ENCODE measurements at regions of chr10 and their contacts with region 1.

Region 1: GRCh38 chr10:101818119-101818871 is at the start of gene OGA:
- DNase-seq: peak; percentile 97 to 100 (median 99)
- H3K4me3 ChIP-seq: peak within 1 kb of the TSS; percentile 95
- H3K4me3 Mint-ChIP-seq: peak within 1 kb of the TSS; percentile 94 to 100 (median 98)
- H3K27ac ChIP-seq: peak within 1 kb of the TSS; percentile 85
- H3K27ac Mint-ChIP-seq: peak within 1 kb of the TSS; percentile 91 to 100 (median 97)
- H3K4me1 ChIP-seq: peaks cover 47% of the 10 kb centered on the region
- H3K4me1 Mint-ChIP-seq: peaks cover 31 to 59% (median 42%) of the 10 kb centered on the region in 4 donors
- H3K27me3 ChIP-seq: no peaks in the 10 kb centered on the region
- H3K27me3 Mint-ChIP-seq: no peaks in the 10 kb centered on the region
- total RNA-seq, gene OGA: 307 to 325 TPM

Region 2: DNA sequence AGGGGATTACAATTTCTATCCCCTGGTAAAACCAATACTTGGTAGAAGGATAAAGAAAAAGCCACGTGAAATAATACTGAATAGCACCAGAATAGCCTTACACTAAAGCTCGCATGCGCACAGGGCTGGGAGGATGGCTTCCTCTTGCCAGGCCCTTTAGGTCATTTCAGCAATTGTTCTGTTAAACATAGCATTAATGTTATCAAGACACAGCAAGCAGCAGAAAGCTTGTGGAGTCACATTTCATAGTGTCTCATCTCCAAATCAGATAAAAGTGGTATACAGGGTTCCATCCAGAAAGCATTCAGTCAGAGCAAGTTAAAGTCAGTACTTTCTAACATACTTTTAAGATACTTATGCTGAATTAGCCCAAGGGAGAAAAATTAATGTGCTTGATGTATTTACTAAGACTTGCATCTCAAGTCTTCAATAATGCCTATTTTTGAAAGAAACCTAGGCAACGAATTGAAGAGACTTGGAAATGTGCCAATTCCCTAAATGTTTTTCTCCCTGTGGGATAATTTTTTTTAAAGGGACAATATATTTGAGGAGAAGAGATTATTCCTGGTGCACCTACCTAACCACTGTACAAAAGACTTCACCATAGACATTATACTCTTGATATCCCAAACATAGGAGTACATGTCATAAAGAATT is 20.8 kb before region 1 on chr10:
- CTCF ChIA-PET with region 1: interaction called, 4 read pairs
- POLR2A ChIA-PET with region 1: interaction called, 30 read pairs
- intact Hi-C with region 1: loop called (anchors 2 kb)
- DNase-seq: no peak
- H3K4me3 ChIP-seq: no peak overlapping the region
- H3K4me3 Mint-ChIP-seq: no peak overlapping the region
- H3K27ac ChIP-seq: no peak overlapping the region
- H3K27ac Mint-ChIP-seq: peak overlapping the region in 4 of 7 donors; percentile 5 to 91 (median 27)
- H3K4me1 ChIP-seq: peaks cover 38% of the 10 kb centered on the region
- H3K4me1 Mint-ChIP-seq: peaks cover 22 to 35% (median 26%) of the 10 kb centered on the region in 4 donors
- H3K27me3 ChIP-seq: no peaks in the 10 kb centered on the region
- H3K27me3 Mint-ChIP-seq: no peaks in the 10 kb centered on the region

Region 3: GRCh38 chr10:101807158-101807557 is 11.1 kb before region 1 on chr10:
- CTCF ChIA-PET with region 1: interaction called, 3 read pairs
- POLR2A ChIA-PET with region 1: interaction called, 30 read pairs
- intact Hi-C with region 1: no loop called
- DNase-seq: no peak
- H3K4me3 ChIP-seq: no peak overlapping the region
- H3K4me3 Mint-ChIP-seq: no peak overlapping the region
- H3K27ac ChIP-seq: no peak overlapping the region
- H3K27ac Mint-ChIP-seq: peak overlapping the region in 3 of 7 donors; percentile 29 to 43 (median 35)
- H3K4me1 ChIP-seq: peaks cover 32% of the 10 kb centered on the region
- H3K4me1 Mint-ChIP-seq: peaks cover 18 to 37% (median 28%) of the 10 kb centered on the region in 4 donors
- H3K27me3 ChIP-seq: no peaks in the 10 kb centered on the region
- H3K27me3 Mint-ChIP-seq: no peaks in the 10 kb centered on the region

Region 4: DNA sequence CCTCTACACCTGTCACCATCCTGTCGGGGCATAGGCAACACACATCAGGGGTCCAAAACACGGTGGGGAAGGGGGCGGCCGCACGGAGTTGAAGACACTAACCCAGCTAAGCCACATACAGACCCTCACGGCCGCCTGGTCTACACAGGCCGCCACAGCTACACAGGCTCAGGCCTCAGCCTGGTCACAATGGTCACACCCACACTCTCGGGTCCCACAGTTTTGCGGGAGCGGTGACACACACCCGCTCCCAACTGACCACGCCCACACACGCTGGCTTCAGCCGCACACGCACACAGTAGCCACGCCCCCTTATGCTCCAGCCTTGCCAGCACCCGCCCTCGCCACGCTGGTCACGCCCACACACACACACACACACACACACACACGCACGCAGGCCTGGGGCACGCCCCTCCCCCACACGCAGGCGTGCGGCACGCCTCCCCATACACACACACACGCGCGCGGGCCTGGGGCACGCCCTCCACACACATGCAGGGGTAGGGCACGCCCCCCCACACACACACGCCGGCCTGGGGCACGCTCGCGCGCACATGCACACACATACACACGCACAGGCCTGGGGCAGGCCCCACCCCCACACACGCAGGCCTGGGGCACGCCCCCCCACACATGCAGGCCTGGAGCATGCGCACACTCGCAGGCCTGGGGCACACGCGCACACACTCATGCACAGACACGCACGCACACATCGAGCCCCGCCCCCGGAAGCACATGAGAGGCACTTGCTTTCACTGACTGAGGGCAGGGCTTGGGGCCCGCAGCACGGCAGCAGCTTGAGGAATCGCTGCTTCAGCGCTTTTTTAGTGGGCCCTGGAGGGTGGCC is 12.2 kb after region 1 on chr10:
- CTCF ChIA-PET with region 1: interaction called, 88 read pairs
- POLR2A ChIA-PET with region 1: interaction called, 204 read pairs
- intact Hi-C with region 1: loop called (anchors 1 kb)
- DNase-seq: peak; percentile 95 to 98 (median 97)
- H3K4me3 ChIP-seq: peak overlapping the region; percentile 57 to 68
- H3K4me3 Mint-ChIP-seq: peak overlapping the region; percentile 84 to 93 (median 88)
- H3K27ac ChIP-seq: peak overlapping the region; percentile 87
- H3K27ac Mint-ChIP-seq: peak overlapping the region; percentile 98 to 100 (median 99)
- H3K4me1 ChIP-seq: peaks cover 59% of the 10 kb centered on the region
- H3K4me1 Mint-ChIP-seq: peaks cover 44 to 80% (median 57%) of the 10 kb centered on the region in 4 donors
- H3K27me3 ChIP-seq: no peaks in the 10 kb centered on the region
- H3K27me3 Mint-ChIP-seq: peaks cover 2 to 7% of the 10 kb centered on the region in 2 donors

Region 5: DNA sequence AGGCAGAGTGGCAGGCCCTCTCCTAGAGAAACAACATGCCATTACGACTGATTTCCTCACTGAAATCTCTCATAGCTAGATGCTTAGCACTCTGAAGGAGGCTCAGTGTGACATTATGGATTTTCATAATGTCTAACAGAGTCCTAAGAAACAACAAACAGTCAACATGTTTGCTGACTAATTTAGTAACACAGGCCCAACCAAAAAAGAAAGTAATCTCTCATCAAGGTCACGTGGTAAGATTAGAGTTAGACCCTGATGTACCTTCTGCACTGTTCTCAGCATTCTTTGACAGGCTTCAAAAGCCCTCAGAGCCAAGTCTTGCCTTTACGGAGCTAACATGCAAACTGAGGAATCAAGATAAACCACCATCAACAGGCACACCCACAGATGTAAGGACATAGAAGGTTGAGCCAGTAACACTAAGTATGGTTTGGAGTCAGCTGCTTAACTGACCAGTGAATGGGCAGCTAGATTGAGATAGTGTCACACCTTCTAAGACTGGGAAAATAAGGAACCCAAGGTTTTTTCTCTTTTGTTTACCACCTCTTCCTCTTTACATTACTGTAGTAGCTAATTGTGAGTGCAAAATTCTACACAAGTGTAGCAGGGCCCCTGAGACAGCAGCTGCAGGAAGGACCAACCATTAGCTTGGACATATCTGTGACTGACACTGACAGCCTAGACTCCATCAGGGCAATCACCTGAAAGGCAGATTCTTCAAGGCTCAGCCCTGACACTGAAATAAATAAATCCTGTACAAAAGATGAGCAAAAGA is 40.6 kb after region 1 on chr10:
- CTCF ChIA-PET with region 1: no interaction called
- POLR2A ChIA-PET with region 1: no interaction called
- intact Hi-C with region 1: no loop called
- DNase-seq: no peak
- H3K4me3 ChIP-seq: no peak overlapping the region
- H3K4me3 Mint-ChIP-seq: peak overlapping the region in 1 of 8 donors; percentile 47
- H3K27ac ChIP-seq: no peak overlapping the region
- H3K27ac Mint-ChIP-seq: peak overlapping the region in 2 of 7 donors; percentile 75 to 90
- H3K4me1 ChIP-seq: peaks cover 7% of the 10 kb centered on the region
- H3K4me1 Mint-ChIP-seq: peaks cover 8 to 17% (median 9%) of the 10 kb centered on the region in 4 donors
- H3K27me3 ChIP-seq: no peaks in the 10 kb centered on the region
- H3K27me3 Mint-ChIP-seq: no peaks in the 10 kb centered on the region

Region 6: GRCh38 chr10:102055647-102056419 is 237.5 kb after region 1 on chr10 and contains the start of gene ARMH3:
- CTCF ChIA-PET with region 1: no interaction called
- POLR2A ChIA-PET with region 1: interaction called, 10 read pairs
- intact Hi-C with region 1: loop called (anchors 1 kb)
- DNase-seq: peak; percentile 89 to 92 (median 90)
- H3K4me3 ChIP-seq: peak within 1 kb of the TSS; percentile 89 to 99
- H3K4me3 Mint-ChIP-seq: peak within 1 kb of the TSS; percentile 95 to 98 (median 96)
- H3K27ac ChIP-seq: peak within 1 kb of the TSS; percentile 88
- H3K27ac Mint-ChIP-seq: peak within 1 kb of the TSS; percentile 94 to 99 (median 97)
- H3K4me1 ChIP-seq: peaks cover 51% of the 10 kb centered on the region
- H3K4me1 Mint-ChIP-seq: peaks cover 31 to 54% (median 42%) of the 10 kb centered on the region in 4 donors
- H3K27me3 ChIP-seq: no peaks in the 10 kb centered on the region
- H3K27me3 Mint-ChIP-seq: no peaks in the 10 kb centered on the region
- total RNA-seq, gene ARMH3: 31.4 to 31.8 TPM

Region 7: DNA sequence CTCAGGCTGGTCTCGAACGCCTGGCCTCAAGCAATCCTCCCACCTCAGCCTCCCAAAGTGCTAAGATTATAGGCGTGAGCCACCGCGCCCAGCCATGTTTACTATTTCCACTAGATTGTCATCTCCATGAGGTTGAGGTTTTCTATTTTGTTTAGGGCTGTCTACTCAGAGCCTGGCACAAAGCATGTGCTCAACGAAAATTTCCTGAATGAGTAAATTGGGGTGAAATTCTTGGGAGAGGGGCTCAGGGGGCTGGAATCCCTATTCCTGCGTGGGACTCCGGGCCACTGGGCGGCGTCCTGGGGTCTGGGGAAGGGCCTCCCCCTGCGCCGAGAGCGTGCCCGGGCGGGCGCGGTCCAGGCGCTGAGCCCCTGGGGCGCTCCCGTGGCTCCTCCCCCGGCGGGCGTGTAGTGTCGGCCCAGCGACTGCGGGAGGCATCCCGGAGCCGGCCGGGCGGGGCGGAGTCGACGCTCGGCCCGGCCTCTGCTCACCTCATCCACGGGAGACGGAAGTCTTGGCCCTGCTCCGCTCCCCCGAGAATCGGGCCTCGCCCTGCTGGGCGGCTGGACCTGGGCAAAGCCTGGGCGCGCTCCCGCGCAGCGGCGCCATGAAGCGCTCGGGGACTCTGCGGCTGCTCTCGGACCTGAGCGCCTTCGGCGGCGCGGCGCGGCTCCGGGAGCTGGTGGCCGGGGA is 246.7 kb after region 1 on chr10 and contains the start of gene HPS6:
- CTCF ChIA-PET with region 1: no interaction called
- POLR2A ChIA-PET with region 1: interaction called, 4 read pairs
- intact Hi-C with region 1: loop called (anchors 2 kb)
- DNase-seq: peak; percentile 86 to 90 (median 88)
- H3K4me3 ChIP-seq: peak within 1 kb of the TSS; percentile 49 to 57
- H3K4me3 Mint-ChIP-seq: peak within 1 kb of the TSS; percentile 87 to 92 (median 88)
- H3K27ac ChIP-seq: peak within 1 kb of the TSS; percentile 90
- H3K27ac Mint-ChIP-seq: peak within 1 kb of the TSS; percentile 92 to 99 (median 96)
- H3K4me1 ChIP-seq: peaks cover 42% of the 10 kb centered on the region
- H3K4me1 Mint-ChIP-seq: peaks cover 19 to 39% (median 29%) of the 10 kb centered on the region in 4 donors
- H3K27me3 ChIP-seq: no peaks in the 10 kb centered on the region
- H3K27me3 Mint-ChIP-seq: no peaks in the 10 kb centered on the region
- total RNA-seq, gene HPS6: 25.1 to 27.9 TPM

Region 8: DNA sequence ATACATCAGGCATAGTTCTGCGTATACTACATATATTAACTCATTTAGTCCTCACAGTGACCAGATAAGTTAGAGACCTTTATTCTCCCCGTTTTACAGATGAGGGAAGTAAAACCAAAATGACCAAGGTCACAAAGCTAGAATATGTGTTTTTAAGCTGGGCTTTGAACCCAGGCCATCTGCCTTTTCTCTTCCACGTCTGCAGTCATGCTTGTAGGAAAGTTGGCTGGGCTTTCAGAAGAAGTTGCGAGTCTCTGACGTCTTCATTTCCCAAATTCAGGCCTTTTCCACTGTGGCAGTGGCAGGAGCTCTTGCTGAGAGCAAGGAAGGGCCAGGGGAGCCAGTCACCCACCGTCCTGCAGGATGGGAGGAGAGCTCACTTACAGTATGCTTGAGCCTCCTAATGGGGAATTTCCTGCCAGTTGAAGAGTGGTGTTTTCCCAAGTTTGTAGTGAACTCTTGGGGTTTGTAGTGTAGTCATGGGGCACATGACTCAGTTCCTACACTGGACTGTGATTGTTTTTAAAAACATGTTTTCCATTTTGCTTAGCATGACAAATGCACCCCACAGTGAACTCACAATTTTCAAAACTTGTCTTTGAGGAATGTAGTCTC is 984.7 kb after region 1 on chr10:
- CTCF ChIA-PET with region 1: no interaction called
- POLR2A ChIA-PET with region 1: no interaction called
- intact Hi-C with region 1: no loop called
- DNase-seq: no peak
- H3K4me3 ChIP-seq: no peak overlapping the region
- H3K4me3 Mint-ChIP-seq: no peak overlapping the region
- H3K27ac ChIP-seq: no peak overlapping the region
- H3K27ac Mint-ChIP-seq: peak overlapping the region in 6 of 7 donors; percentile 12 to 75 (median 44)
- H3K4me1 ChIP-seq: peaks cover 9% of the 10 kb centered on the region
- H3K4me1 Mint-ChIP-seq: peaks cover 15 to 41% (median 28%) of the 10 kb centered on the region in 4 donors
- H3K27me3 ChIP-seq: no peaks in the 10 kb centered on the region
- H3K27me3 Mint-ChIP-seq: no peaks in the 10 kb centered on the region

Measured in CD4-positive, alpha-beta memory T cell (primary cell).